Gastrocnemius medialis (tissue), 4 donors: ENCODE measurements at regions of chr17 and their contacts with region 1.

Region 1: DNA sequence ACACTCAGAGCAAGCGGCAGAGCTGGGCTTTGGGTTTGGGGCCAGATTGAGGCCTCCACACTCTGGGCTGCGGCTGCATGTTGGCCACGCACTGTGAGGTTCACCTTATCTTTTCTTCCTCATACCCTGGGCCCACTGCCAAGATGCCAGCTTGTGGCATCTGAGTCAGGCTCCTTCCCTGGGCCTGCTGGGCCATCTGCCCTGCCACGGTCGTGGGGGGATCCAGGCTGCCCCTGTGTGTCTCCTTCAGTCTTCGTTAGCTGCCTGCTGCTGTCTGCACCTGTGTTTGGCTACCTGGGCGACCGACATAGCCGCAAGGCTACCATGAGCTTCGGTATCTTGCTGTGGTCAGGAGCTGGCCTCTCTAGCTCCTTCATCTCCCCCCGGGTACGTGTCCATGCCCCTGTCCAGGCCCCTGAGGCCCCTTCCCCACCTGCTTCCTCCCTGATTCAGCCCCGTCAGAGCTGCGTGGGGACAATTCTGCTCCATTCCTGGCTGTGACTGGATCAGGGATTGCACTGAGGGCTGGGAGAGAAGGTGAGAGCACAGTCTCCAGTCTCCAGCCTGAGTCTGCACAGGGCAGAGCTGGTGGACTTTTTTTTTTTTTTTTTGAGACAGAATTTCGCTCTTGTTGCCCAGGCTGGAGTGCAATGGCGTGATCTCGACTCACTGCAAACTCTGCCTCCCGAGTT is 11.2 kb downstream of the SPNS3 start:
- DNase-seq: peak; percentile 54 to 70
- ATAC-seq: peak; percentile 83 to 86
- H3K4me3 ChIP-seq: no peak overlapping the region
- H3K27ac ChIP-seq: no peak overlapping the region
- H3K4me1 ChIP-seq: no peaks in the 10 kb centered on the region
- H3K27me3 ChIP-seq: no peaks in the 10 kb centered on the region
- CTCF ChIP-seq: no peak
- POLR2A ChIP-seq: no peak

Region 2: DNA sequence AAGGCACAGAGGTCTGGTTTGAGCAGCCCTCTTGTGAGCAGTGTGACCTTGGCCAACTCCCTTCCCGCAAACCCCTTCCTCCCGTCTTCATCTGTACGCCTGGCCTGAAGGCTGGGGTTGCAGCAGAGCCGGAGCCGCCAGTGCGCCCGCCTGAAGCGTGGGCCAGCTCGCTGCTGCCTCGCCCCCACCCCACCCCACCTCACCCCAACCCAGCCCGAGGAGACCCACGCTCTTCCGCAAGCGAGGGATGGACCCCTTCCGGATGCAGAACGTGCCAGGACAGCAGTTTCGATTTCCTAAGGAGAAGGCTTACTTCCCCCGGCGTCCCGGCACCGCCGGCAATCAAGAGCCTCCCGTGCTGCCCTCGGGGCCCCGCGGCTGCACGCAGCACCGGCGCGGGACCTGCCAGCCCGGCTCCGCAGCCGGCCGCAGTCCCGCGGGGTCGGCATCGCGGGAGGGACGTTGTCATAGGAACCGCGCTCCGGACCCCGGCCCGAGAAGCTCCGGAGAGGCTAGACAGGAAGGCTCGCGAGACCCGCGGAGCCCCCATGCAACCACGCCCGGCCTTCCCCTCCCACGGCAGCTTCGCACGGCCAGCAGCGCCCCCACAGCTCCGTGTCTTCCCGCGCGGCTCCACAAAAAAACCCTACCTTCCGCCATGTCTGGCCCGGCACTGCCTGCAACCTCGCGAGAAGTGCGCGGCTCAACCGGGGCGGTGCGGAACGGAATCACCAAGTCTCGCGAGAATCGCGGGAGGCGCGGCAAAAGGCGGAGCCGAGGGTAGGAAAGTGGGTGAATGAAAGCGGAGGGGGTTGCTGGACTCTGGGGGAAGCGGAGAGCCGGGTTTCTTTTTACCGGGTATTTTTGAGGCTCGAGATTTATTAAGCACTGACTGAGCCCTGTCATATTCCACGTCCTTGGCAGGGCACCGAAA is 181.4 kb before region 1 on chr17 and contains the start of gene ANKFY1:
- in situ Hi-C with region 1: no loop called
- intact Hi-C with region 1: no loop called
- DNase-seq: peak; percentile 90 to 92
- ATAC-seq: peak; percentile 86 to 93
- H3K4me3 ChIP-seq: peak within 1 kb of the TSS; percentile 67 to 99 (median 86)
- H3K27ac ChIP-seq: peak within 1 kb of the TSS; percentile 79 to 93 (median 82)
- H3K4me1 ChIP-seq: peaks cover 19 to 21% of the 10 kb centered on the region in 2 donors
- H3K27me3 ChIP-seq: no peaks in the 10 kb centered on the region
- CTCF ChIP-seq: peak in 2 of 5 experiments; percentile 21 to 35
- POLR2A ChIP-seq: peak; percentile 70 to 75
- total RNA-seq, gene ANKFY1: 12.6 to 26.9 (median 13.5) TPM

Region 3: DNA sequence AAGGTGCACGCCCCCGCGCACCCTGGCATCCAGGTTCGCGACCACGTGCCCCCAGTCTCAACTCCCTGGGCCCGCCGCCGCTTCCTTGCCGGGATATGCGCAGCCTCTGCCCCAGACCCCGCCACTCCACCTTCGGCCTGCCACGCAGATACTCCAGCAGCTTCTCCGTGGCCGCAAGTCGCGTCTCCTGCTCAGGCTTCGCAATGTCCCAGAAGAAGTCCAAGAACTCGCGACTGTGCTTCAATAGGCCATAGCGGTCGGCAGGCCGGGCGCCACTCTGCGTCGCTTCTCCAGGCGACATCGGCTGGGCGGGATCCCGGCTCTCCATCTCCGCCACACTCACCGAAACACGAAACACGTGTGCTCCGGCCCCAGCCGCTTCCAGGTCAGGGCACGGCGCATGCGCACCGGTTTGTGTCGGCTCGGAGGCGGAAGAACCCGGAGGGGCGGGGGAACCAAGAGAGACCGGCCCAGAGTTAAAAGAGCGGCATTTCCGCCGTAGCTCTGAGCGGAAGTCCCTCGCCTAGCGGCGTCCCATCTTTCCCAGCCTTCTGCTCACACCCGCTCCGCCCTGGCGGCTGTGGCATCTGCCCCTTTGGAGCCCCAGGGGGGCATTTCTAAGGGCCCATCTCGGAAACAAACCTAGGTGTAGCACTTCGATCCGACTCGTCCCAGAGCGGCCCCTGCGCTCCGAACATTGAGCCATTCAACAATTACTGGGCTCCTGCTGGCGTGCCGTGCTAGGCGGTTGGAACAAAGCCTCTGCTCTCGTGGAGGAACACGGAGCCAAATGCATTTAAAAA is 110.3 kb after region 1 on chr17 and contains the start of gene MYBBP1A:
- in situ Hi-C with region 1: loop called in 1 of 4 experiments (anchors 25 kb)
- intact Hi-C with region 1: no loop called
- DNase-seq: peak; percentile 95 to 96
- ATAC-seq: peak; percentile 96 to 98
- H3K4me3 ChIP-seq: peak within 1 kb of the TSS; percentile 90 to 99 (median 97)
- H3K27ac ChIP-seq: peak within 1 kb of the TSS; percentile 76 to 95 (median 87)
- H3K4me1 ChIP-seq: peaks cover 17 to 19% of the 10 kb centered on the region in 2 donors
- H3K27me3 ChIP-seq: no peaks in the 10 kb centered on the region
- CTCF ChIP-seq: peak in 3 of 5 experiments; percentile 25 to 32 (median 31)
- POLR2A ChIP-seq: peak; percentile 55 to 61
- total RNA-seq, gene MYBBP1A: 42.5 to 60.2 (median 48.9) TPM

Region 4: DNA sequence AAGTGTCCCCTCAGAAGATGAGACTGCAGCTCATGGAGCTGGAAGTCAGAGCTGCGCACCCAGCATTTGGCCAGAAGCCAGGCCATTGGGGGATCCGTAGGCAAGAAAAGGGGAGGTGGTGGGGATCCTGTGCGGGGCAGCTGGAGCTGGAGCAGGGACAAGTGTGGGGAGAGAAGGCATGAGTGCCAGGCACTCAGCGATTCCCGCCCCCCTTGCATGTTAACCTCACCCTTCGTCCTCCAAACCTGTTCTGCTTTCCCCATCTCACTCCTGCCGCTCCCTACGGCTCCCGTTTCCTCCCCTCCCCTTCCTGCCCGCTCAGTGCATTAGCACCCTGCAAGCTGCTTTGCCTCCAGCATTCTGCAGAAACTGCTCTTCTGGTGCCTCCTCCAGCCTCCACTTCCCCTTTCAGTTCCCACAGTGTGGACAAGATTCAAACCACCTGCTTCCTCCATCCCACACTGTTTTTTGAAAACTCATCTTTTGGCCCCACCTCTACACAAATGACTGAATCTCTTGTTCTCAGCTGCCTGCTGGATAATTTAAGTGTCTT is 191.0 kb after region 1 on chr17:
- in situ Hi-C with region 1: loop called in 2 of 4 experiments (anchors 25 kb)
- intact Hi-C with region 1: no loop called
- DNase-seq: no peak
- ATAC-seq: no peak
- H3K4me3 ChIP-seq: no peak overlapping the region
- H3K27ac ChIP-seq: no peak overlapping the region
- H3K4me1 ChIP-seq: no peaks in the 10 kb centered on the region
- H3K27me3 ChIP-seq: peaks cover 27 to 29% (median 29%) of the 10 kb centered on the region in 3 donors
- CTCF ChIP-seq: no peak
- POLR2A ChIP-seq: no peak